Mucosa of descending colon (tissue), 3 donors: ENCODE measurements at regions of chr7 and their contacts with region 1.

Region 1: GRCh38 chr7:92833024-92833765 is 3.2 kb downstream of the CDK6 start:
- DNase-seq: peak; percentile 94 to 95 (median 95)
- ATAC-seq: peak; percentile 85
- H3K4me3 ChIP-seq: peak overlapping the region; percentile 59
- H3K4me1 ChIP-seq: peaks cover 11% of the 10 kb centered on the region
- CTCF ChIP-seq: peak; percentile 80

Region 2: DNA sequence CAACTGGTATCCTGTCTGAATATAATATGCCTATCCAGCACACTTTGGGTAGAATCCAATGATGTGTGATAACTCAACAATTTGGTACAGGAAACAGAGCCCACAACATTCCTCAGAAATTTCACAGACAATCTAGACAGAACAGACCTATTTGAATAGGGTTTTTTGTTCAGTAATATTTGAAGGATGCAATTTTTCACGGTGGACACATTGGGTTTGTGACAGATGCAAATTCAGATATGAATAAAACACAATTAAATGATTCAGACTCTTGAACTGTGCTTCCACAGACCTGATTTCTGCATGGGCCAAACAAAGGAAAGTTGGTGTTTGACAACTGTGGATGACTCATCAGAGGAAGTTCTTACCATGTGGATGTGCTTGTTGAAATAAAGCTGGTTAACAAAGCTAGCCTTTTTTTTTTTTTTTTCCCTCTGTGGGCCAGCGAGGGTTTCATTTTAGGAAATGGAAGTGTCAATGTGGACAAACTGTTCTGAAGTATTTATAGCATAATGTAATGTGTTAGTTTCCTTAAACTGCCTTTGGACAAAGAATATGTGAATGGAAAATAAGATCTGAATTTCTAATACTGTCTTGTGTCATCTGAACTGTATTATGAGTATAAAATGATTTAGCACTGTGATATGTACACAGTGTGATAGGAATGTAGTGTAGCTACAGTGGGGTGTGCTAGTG is 199.8 kb before region 1 on chr7:
- intact Hi-C with region 1: loop called in 1 of 2 experiments (anchors 10 kb)
- DNase-seq: peak in 1 of 3 donors; percentile 50
- ATAC-seq: peak; percentile 93
- H3K4me3 ChIP-seq: no peak overlapping the region
- H3K4me1 ChIP-seq: peaks cover 35% of the 10 kb centered on the region
- CTCF ChIP-seq: no peak

Region 3: GRCh38 chr7:92691578-92691977 is 141.6 kb before region 1 on chr7:
- intact Hi-C with region 1: loop called (anchors 5 kb)
- DNase-seq: peak in 1 of 3 donors; percentile 72
- ATAC-seq: peak; percentile 64
- H3K4me3 ChIP-seq: no peak overlapping the region
- H3K4me1 ChIP-seq: peaks cover 6% of the 10 kb centered on the region
- CTCF ChIP-seq: peak; percentile 55

Region 4: GRCh38 chr7:93055543-93056107 is 222.4 kb after region 1 on chr7:
- intact Hi-C with region 1: loop called in 1 of 2 experiments (anchors 5 kb)
- DNase-seq: no peak
- ATAC-seq: peak; percentile 62
- H3K4me3 ChIP-seq: no peak overlapping the region
- H3K4me1 ChIP-seq: peaks cover 6% of the 10 kb centered on the region
- CTCF ChIP-seq: peak; percentile 41